Activated naive CD4-positive, alpha-beta T cell treated with anti-CD3 and anti-CD28 coated beads for 36 hours (primary cell): ENCODE measurements at regions of chr11 and their contacts with region 1.

Region 1: GRCh38 chr11:47176328-47177228 is at the start of gene ARFGAP2:
- DNase-seq: peak; percentile 97
- H3K4me3 Mint-ChIP-seq: peak within 1 kb of the TSS; percentile 97
- H3K27ac Mint-ChIP-seq: peak within 1 kb of the TSS; percentile 99
- H3K4me1 Mint-ChIP-seq: peaks cover 41% of the 10 kb centered on the region
- H3K27me3 Mint-ChIP-seq: no peaks in the 10 kb centered on the region
- total RNA-seq, gene ARFGAP2: 75.1 to 78.7 TPM

Region 2: DNA sequence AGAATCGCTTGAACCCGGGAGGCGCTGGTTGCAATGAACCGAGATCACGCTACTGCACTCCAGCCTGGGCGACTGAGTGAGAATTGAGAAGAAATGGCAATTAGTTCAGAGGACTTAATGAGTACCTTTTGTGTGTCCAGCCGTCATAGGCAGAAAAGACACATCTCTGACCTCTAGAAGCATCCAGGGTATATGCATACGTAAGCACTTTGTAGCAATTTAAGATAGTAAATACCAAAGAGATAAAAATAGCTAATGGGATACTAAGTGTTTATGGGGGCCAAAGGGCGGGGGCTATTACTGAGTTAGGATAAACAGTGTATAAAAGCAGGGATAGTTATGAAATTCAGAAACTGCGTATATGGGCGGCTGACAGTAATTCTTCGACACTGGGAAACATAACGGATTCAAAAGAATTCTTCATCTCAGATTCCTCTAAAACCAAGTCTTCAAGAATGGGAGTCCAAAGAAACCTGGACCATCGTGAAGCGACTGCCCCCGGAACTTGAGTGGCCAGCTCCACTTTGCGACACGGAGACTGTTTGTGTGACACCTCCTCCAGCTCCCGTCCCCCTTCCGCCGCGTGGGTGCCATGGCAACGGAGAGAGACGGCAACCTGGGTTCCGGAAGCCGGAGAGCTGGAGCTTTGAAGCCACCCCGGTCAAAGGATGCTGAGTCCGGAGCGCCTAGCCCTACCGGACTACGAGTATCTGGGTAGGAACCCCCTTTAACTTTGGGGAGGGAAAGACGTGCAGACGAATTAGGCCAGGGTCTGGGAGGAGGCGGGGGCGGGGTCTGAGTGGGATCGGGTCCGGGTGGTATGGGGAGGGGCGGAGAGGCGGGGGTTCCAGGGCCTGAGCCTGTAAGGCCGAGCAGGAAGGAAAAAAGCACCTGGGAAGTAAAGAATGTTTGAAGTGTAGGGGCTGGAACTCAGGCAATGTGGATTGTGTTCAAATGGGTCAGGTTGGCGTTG is 240.2 kb before region 1 on chr11 and contains the start of gene CSTPP1:
- CTCF ChIA-PET with region 1: no interaction called
- intact Hi-C with region 1: loop called (anchors 1 kb)
- DNase-seq: peak; percentile 97
- H3K4me3 Mint-ChIP-seq: peak within 1 kb of the TSS; percentile 98
- H3K27ac Mint-ChIP-seq: peak within 1 kb of the TSS; percentile 88
- H3K4me1 Mint-ChIP-seq: peaks cover 18% of the 10 kb centered on the region
- H3K27me3 Mint-ChIP-seq: no peaks in the 10 kb centered on the region
- total RNA-seq, gene CSTPP1: 14.0 TPM

Region 3: GRCh38 chr11:47248664-47249377 is 72.2 kb after region 1 on chr11 and contains the start of gene ACP2:
- CTCF ChIA-PET with region 1: interaction called, 10 read pairs
- intact Hi-C with region 1: loop called (anchors 1 kb)
- DNase-seq: peak; percentile 94
- H3K4me3 Mint-ChIP-seq: peak within 1 kb of the TSS; percentile 99
- H3K27ac Mint-ChIP-seq: peak within 1 kb of the TSS; percentile 97
- H3K4me1 Mint-ChIP-seq: peaks cover 24% of the 10 kb centered on the region
- H3K27me3 Mint-ChIP-seq: no peaks in the 10 kb centered on the region
- total RNA-seq, gene ACP2: 8.0 to 9.3 TPM

Region 4: DNA sequence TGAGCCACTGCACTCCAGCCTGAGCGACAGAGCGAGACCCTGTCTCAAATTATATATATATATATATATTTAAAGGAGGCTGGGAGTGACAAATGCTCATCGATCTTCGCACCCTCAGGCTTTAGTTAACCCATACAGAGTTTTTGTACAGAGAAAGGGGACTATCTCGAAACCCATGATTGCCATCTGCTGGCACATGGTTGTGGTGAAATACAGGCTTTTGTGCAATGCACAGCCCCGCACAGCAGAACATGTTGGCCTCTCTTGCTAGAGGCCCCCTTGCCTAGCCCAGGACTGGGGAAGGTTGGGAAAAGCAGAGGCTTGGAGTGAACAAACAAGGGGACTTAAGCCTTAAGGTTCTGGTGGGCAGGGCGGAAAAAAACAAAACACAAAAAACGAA is 172.3 kb after region 1 on chr11:
- CTCF ChIA-PET with region 1: no interaction called
- intact Hi-C with region 1: loop called (anchors 2 kb)
- DNase-seq: peak; percentile 46
- H3K4me3 Mint-ChIP-seq: no peak overlapping the region
- H3K27ac Mint-ChIP-seq: no peak overlapping the region
- H3K4me1 Mint-ChIP-seq: no peaks in the 10 kb centered on the region
- H3K27me3 Mint-ChIP-seq: no peaks in the 10 kb centered on the region

Region 5: DNA sequence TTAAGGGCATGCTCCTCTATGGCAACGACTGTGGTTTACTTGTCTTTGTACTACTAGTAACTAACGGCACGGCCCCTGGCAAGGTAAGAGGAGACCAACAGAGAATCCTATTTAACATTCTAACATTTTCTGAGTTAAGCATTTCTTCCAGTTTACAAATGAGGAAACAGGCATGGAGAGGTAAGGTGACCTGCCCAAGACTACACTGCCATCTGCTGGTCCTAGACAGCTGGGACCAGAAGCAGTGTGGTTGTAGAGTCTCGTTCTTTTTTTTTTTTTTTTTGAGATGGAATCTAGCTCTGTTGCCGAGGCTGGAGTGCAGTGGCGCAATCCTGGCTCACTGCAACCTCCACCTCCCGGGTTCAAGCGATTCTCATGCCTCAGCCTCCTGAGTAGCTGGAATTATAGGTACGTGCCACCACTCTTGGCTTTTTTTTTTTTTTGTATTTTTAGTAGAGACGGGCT is 277.6 kb after region 1 on chr11:
- CTCF ChIA-PET with region 1: interaction called, 5 read pairs
- intact Hi-C with region 1: loop called (anchors 1 kb)
- DNase-seq: peak; percentile 85
- H3K4me3 Mint-ChIP-seq: no peak overlapping the region
- H3K27ac Mint-ChIP-seq: no peak overlapping the region
- H3K4me1 Mint-ChIP-seq: peaks cover 2% of the 10 kb centered on the region
- H3K27me3 Mint-ChIP-seq: no peaks in the 10 kb centered on the region

Region 6: GRCh38 chr11:47847892-47848635 is 671.5 kb after region 1 on chr11 and contains the start of gene NUP160:
- CTCF ChIA-PET with region 1: interaction called, 4 read pairs
- intact Hi-C with region 1: loop called (anchors 1 kb)
- DNase-seq: peak; percentile 92
- H3K4me3 Mint-ChIP-seq: peak within 1 kb of the TSS; percentile 93
- H3K27ac Mint-ChIP-seq: peak within 1 kb of the TSS; percentile 92
- H3K4me1 Mint-ChIP-seq: peaks cover 47% of the 10 kb centered on the region
- H3K27me3 Mint-ChIP-seq: no peaks in the 10 kb centered on the region
- total RNA-seq, gene NUP160: 64.7 to 64.8 TPM